ENCODE measurements at regions of chr19 and their contacts with region 1.

Region 1: DNA sequence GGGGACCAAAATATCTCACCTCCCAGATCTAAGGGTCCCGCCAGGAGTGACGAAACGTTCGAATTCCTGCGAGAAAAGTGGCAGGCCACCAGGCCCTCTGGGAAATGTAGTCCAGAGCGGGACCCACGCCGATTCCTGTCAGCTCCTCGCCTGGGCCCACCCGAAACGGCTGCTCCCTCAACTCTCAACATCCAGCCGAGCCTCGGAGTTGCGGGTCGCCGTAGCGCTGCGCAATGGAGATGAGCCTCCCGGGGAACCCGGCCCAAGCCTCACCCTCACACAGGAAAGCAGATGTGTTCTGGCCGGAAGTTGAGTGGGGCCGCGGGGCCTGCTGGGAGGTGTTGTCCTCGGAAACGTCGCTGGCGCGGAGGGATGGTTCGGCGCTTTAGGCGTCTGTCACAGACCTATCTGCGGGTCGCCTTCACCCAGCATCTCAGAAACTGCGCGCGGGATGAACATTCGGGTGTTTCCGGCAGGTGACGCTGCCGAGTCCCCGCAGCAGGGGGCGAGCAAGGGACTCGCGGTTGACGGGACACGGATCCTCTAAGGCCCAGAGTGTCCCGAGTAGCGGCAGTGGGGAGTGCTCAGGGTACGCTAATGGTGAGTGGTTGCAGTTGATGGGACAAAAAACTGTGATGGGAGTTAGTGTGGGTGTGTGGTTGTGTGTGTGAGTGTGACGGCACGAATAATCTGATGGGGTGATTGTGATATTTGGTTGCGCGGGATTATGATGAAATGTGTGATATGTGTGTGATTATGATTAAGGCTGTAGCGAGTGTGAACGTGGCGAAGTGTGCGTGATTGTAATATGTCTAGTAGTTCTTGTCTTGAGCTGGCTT is at the starts of genes ZNF568 and ZNF829:
- DNase-seq: peak; percentile 97
- ATAC-seq: peak; percentile 98
- H3K4me3 Mint-ChIP-seq: peak within 1 kb of the TSS; percentile 88
- H3K27ac Mint-ChIP-seq: peak within 1 kb of the TSS; percentile 98
- H3K4me1 Mint-ChIP-seq: peaks cover 15% of the 10 kb centered on the region
- H3K27me3 Mint-ChIP-seq: no peaks in the 10 kb centered on the region
- total RNA-seq, gene ZNF568: 6.5 to 8.4 TPM
- total RNA-seq, gene ZNF829: 7.1 TPM

Region 2: GRCh38 chr19:36528194-36528920 is 387.9 kb before region 1 on chr19 and contains the start of gene ZNF260:
- CTCF ChIA-PET with region 1: no interaction called
- POLR2A ChIA-PET with region 1: no interaction called
- intact Hi-C with region 1: loop called in 1 of 2 experiments (anchors 1 kb)
- DNase-seq: peak; percentile 97
- ATAC-seq: peak; percentile 91
- H3K4me3 Mint-ChIP-seq: peak within 1 kb of the TSS; percentile 87
- H3K27ac Mint-ChIP-seq: peak within 1 kb of the TSS; percentile 96
- H3K4me1 Mint-ChIP-seq: peaks cover 14% of the 10 kb centered on the region
- H3K27me3 Mint-ChIP-seq: no peaks in the 10 kb centered on the region
- total RNA-seq, gene ZNF260: 5.7 to 8.2 TPM

Region 3: DNA sequence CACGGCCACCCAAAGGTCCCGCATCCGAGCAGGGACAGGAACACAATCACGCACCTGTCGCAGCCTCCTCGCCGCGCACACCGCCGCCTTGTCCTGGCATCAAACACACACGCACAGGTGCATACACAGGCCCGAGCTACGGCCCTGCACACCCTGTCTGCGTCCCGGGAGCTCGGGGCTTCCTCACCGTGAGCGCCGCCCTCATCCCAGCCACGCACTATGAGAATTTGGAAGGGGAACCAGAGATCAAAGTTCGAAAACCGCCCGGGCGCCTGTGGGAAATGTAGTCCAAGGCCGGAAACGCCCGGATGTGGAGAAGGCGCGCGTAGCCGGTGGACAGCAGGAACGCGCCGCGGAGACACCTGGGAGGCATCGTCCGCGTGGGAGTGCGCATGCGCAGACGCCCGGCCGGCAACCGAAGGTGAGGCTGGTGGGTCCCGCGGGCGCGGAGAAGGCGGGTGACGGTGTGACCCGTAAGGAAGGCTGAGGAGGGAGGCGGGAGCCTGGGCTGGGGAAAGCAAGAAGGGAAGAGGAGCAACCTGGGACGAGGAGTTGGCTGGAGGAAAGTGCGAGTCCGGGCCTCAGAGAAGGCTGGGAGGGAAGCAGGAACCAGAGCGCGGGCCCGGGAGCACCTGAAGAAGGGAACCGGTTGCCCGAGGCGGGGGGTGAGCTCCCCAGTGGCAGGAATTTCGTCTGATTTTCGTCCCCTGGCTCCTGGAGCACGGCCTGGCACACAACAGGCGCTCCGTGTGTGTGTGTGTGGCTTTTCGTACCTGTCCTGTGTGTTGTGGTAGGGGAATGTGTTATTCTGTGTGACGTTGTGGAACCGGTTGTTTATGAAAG is 228.8 kb before region 1 on chr19 and contains the start of gene ZNF567:
- CTCF ChIA-PET with region 1: no interaction called
- POLR2A ChIA-PET with region 1: no interaction called
- intact Hi-C with region 1: loop called in 1 of 2 experiments (anchors 1 kb)
- DNase-seq: peak; percentile 99
- ATAC-seq: peak; percentile 93
- H3K4me3 Mint-ChIP-seq: peak within 1 kb of the TSS; percentile 99
- H3K27ac Mint-ChIP-seq: peak within 1 kb of the TSS; percentile 96
- H3K4me1 Mint-ChIP-seq: peaks cover 27% of the 10 kb centered on the region
- H3K27me3 Mint-ChIP-seq: no peaks in the 10 kb centered on the region
- total RNA-seq, gene ZNF567: 7.4 to 8.6 TPM

Region 4: DNA sequence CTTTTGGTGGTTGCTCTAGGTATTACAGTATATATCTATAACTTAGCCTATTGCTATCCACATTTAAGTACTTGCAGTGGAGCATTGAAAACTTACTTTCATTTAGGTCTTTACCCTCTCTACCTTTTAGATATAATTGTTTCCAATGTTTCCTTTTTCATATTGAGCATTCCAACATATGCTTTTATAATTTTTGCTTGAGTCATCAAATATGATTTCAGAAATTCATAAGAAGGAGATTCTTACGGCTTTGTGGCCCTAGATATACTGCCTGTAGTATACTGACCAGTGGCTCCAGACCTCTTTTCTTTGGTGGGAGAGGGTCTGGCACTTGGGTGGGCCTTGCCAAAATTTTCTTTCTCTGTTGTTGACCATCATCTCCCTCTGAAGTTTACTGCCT is 110.8 kb before region 1 on chr19:
- CTCF ChIA-PET with region 1: no interaction called
- POLR2A ChIA-PET with region 1: no interaction called
- intact Hi-C with region 1: no loop called
- DNase-seq: no peak
- ATAC-seq: no peak
- H3K4me3 Mint-ChIP-seq: no peak overlapping the region
- H3K27ac Mint-ChIP-seq: no peak overlapping the region
- H3K4me1 Mint-ChIP-seq: no peaks in the 10 kb centered on the region
- H3K27me3 Mint-ChIP-seq: no peaks in the 10 kb centered on the region

Region 5: DNA sequence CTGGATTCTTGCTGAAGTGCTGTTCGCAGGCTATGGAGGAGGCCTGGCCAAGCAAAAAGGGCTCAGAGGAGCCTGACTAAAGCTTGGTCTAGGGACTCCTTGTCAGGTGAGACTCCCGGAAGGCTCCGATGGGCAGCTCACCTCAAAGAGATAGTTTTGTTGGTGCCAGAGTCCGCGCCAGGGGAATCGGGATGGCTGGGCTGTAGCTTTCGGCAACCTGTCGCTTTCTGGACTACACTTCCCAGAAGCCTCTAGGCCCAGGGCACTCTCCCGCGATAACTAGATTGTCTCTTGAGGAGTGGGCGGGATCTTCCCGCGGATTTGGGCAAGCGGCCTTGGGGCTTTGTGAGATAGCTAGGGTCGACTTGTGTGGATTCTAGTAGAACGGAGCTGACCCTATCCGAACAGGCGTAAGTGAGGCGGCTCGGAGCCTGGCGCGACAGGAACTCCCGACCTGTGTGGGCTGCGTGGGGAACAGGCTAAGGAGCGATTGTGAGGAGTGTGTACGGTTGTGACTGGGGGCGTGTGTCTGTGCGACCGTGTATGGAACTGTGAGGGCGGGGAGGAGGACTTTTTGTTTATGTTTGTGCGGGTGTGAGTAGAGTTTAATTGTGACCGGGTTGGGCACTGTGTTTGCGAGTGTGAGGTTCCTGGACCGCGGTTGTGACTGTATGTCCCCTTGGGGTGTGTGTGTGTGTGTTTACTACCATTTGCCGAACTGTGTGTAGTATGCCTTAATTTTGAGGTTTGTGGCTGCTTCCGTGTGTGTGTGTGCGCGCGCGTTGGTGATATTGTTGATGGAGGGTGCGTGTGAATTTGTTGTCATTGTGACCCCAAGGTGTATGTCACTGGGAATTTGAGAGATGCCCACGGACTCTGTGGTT is 65.4 kb before region 1 on chr19 and contains the start of gene ZNF345:
- CTCF ChIA-PET with region 1: no interaction called
- POLR2A ChIA-PET with region 1: interaction called, 4 read pairs
- intact Hi-C with region 1: loop called (anchors 1 kb)
- DNase-seq: peak; percentile 91
- ATAC-seq: peak; percentile 82
- H3K4me3 Mint-ChIP-seq: no peak within 1 kb of the TSS
- H3K27ac Mint-ChIP-seq: no peak within 1 kb of the TSS
- H3K4me1 Mint-ChIP-seq: peaks cover 10% of the 10 kb centered on the region
- H3K27me3 Mint-ChIP-seq: no peaks in the 10 kb centered on the region
- total RNA-seq, gene ZNF345: 3.5 to 4.6 TPM

Region 6: GRCh38 chr19:37217855-37218591 is 301.8 kb after region 1 on chr19 and contains the start of gene ZNF383:
- CTCF ChIA-PET with region 1: no interaction called
- POLR2A ChIA-PET with region 1: no interaction called
- intact Hi-C with region 1: loop called in 1 of 2 experiments (anchors 1 kb)
- DNase-seq: peak; percentile 89
- ATAC-seq: peak; percentile 87
- H3K4me3 Mint-ChIP-seq: peak within 1 kb of the TSS; percentile 93
- H3K27ac Mint-ChIP-seq: peak within 1 kb of the TSS; percentile 99
- H3K4me1 Mint-ChIP-seq: peaks cover 24% of the 10 kb centered on the region
- H3K27me3 Mint-ChIP-seq: no peaks in the 10 kb centered on the region
- total RNA-seq, gene ZNF383: 8.5 to 9.2 TPM

Region 7: DNA sequence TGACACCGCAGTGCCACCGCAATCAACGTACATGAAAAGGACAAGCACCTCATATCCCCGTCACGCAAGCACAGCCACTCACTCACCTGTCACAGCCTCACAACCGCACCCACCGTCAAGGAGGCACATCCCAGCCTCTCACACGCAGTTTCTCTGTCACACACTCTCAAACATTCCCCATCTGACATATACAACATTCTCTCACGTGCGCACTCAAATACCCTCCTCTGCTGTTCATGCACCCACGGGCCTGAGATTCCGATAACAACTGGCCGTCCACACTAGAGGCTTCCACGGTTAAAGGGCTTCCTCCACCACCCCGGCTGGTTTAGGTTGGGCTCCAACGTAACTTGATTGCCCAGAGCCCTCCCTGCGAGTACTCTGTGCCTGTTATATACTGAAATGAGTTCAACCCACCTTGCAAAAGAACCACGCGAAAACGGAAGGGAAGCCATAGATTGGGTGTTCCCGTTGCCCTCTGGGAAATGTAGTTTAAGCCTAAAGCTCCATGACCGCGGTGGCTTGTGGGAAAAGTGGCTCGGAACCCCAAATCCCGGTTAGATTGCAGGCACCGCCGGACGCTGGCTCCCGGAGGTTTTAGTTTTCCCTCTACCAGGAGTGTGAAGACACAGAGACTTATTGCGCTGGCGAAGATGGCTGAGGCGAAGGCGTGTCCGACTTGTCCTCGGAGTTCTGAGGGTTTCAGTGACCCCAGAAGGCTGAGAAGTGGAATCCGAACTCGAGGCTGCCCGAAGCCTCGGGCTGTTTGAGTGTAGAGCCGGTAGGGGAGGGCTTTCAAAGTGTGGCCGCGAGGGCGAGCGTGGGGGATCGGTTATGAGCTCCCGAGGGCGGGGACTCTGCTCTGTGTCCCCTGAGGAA is 863.2 kb after region 1 on chr19 and contains the start of gene ZNF573:
- CTCF ChIA-PET with region 1: no interaction called
- POLR2A ChIA-PET with region 1: no interaction called
- intact Hi-C with region 1: loop called in 1 of 2 experiments (anchors 1 kb)
- DNase-seq: peak; percentile 90
- ATAC-seq: peak; percentile 94
- H3K4me3 Mint-ChIP-seq: peak within 1 kb of the TSS; percentile 95
- H3K27ac Mint-ChIP-seq: peak within 1 kb of the TSS; percentile 96
- H3K4me1 Mint-ChIP-seq: peaks cover 22% of the 10 kb centered on the region
- H3K27me3 Mint-ChIP-seq: no peaks in the 10 kb centered on the region
- total RNA-seq, gene ZNF573: 8.9 to 9.7 TPM